Activated T-helper 2 cell treated with anti-CD3 and anti-CD28 coated beads, Interferon-gamma antibody, Interleukin-2, Interleukin-4, amounts not matched to agents 10 μg/mL and 5 μg/mL and 100 μg/mL, durations not matched to agents 14 hours and 24 hours and 36 hours (primary cell): ENCODE measurements at regions of chr11 and their contacts with region 1.

Region 1: GRCh38 chr11:129950101-129951091 is 52.2 kb downstream of the PRDM10 start:
- DNase-seq: no peak
- H3K4me3 Mint-ChIP-seq: no peak overlapping the region
- H3K27ac Mint-ChIP-seq: no peak overlapping the region
- H3K4me1 Mint-ChIP-seq: peaks cover 29% of the 10 kb centered on the region
- H3K27me3 Mint-ChIP-seq: no peaks in the 10 kb centered on the region

Region 2: GRCh38 chr11:129911298-129911697 is 39.1 kb before region 1 on chr11:
- intact Hi-C with region 1: no loop called
- DNase-seq: no peak
- H3K4me3 Mint-ChIP-seq: no peak overlapping the region
- H3K27ac Mint-ChIP-seq: peak overlapping the region; percentile 68
- H3K4me1 Mint-ChIP-seq: peaks cover 6% of the 10 kb centered on the region
- H3K27me3 Mint-ChIP-seq: no peaks in the 10 kb centered on the region

Region 3: GRCh38 chr11:129960216-129961214 is 10.1 kb after region 1 on chr11:
- intact Hi-C with region 1: loop called (anchors 1 kb)
- DNase-seq: no peak
- H3K4me3 Mint-ChIP-seq: no peak overlapping the region
- H3K27ac Mint-ChIP-seq: peak overlapping the region; percentile 65
- H3K4me1 Mint-ChIP-seq: peaks cover 25% of the 10 kb centered on the region
- H3K27me3 Mint-ChIP-seq: no peaks in the 10 kb centered on the region

Region 4: GRCh38 chr11:130118636-130119387 is 168.4 kb after region 1 on chr11:
- intact Hi-C with region 1: loop called (anchors 1 kb)
- DNase-seq: no peak
- H3K4me3 Mint-ChIP-seq: no peak overlapping the region
- H3K27ac Mint-ChIP-seq: no peak overlapping the region
- H3K4me1 Mint-ChIP-seq: peaks cover 41% of the 10 kb centered on the region
- H3K27me3 Mint-ChIP-seq: peaks cover 12% of the 10 kb centered on the region